SK-MEL-5 (cell line): ENCODE measurements at regions of chr4 and their contacts with region 1.

Region 1: GRCh38 chr4:153541456-153542096 is 75.4 kb downstream of the TMEM131L start:
- DNase-seq: no peak

Region 2: DNA sequence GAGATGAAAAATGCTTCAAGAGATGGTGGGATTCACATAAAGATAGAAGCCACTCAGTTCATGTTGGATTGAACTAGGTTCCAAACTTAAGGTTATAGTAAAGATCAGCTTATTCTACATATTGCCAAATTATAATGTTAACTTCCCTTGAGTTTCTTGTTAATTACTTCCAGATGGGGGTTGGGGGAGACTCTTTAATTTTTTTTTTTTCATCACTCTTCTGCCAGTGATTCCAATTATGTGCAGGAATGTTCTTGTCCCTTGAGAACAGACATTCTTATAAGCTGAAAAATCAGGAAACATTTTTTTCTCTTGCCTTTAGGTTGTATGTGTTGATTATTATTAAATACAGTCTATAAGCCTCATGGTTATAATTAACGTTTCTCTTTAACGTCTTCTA is 167.1 kb before region 1 on chr4:
- in situ Hi-C with region 1: loop called (anchors 10 kb)
- DNase-seq: no peak

Region 3: DNA sequence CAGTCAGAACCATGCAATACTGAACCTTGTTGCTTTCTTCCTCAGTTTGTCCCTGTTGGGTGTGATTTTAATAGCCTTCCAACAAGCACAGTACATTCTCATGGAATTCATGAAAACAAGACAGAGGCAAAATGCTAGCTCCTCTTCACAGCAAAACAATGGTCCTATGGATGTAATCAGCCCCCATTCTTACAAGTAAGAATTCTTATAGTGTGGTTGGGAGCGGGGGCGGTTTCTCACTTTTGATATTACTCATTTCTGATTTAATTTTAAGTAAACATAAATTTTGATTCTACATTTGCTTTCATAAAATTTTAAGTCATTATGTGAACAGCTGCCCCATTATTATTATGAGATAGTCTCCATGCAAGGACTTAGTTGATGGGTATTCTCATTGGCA is 61.7 kb after region 1 on chr4:
- in situ Hi-C with region 1: no loop called
- DNase-seq: no peak